Aorta (tissue), 5 donors: ENCODE measurements at regions of chr10 and their contacts with region 1.

Region 1: GRCh38 chr10:63919575-63920279 is 398.5 kb downstream of the REEP3 start:
- DNase-seq: no peak
- ATAC-seq: no peak
- H3K4me3 ChIP-seq: no peak overlapping the region
- H3K27ac ChIP-seq: no peak overlapping the region
- H3K4me1 ChIP-seq: no peaks in the 10 kb centered on the region
- H3K27me3 ChIP-seq: peaks cover 0 to 1% of the 10 kb centered on the region in 2 donors

Region 2: DNA sequence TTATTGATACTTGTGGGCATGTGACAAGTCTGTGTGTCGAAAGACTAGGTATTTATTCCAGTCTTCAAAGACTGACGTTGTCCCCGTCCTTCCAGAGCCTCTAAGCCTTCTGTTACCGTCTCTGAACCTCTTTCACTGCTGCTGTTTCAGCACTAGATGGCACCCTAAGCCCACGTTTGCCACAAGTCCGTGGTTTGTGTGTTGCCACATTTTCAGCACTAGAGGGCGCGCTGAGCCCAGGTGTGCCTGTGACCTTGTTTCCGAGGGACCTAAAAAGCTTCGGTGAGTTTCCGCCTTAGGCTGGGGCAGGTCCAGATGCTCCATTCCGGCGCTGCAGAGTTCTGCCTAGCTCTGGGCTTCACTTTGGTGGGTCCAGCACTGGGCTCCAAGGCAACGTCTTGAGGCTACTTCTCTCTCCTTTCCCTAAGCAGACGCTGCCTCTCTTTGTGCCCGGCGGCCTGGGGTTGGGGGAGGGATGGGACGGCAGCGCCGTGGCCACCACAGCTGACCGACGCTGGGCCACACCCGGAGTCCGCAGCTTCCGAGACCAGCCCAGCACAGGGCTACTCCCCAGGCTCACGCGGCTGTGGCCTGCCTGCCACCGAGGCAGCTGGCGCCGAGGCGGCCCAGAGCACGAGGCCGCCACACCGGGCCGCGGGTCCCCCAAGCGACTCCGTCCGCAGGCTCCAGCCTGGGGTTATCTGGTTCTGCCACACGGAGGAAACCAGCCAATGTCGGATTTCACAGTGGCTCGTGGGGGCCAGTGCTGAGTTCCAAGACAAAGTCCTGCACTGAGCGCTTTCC is 121.7 kb after region 1 on chr10:
- intact Hi-C with region 1: no loop called
- DNase-seq: peak; percentile 74 to 87
- ATAC-seq: peak; percentile 91
- H3K4me3 ChIP-seq: peak overlapping the region; percentile 4 to 27
- H3K27ac ChIP-seq: no peak overlapping the region
- H3K4me1 ChIP-seq: no peaks in the 10 kb centered on the region
- H3K27me3 ChIP-seq: no peaks in the 10 kb centered on the region

Region 3: DNA sequence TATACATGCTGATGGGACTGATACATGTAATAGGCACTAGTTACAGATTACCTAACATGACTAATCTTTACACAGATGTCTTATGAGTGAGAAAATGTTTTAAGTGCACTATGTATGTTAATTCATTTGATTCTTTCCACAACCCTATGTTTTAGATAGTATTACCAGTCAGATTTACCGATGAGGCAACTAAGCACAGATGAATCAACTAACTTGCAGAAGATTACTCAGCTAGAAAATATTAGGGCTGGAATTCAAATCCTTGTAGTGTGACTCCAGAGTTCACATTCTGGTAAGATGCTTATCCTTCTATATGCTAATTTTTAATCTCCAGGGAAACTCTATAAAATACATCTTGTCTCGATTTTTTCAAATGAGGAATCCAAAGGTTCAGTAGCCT is 566.4 kb after region 1 on chr10:
- intact Hi-C with region 1: loop called in 1 of 2 experiments (anchors 10 kb)
- DNase-seq: no peak
- ATAC-seq: no peak
- H3K4me3 ChIP-seq: no peak overlapping the region
- H3K27ac ChIP-seq: no peak overlapping the region
- H3K4me1 ChIP-seq: no peaks in the 10 kb centered on the region
- H3K27me3 ChIP-seq: no peaks in the 10 kb centered on the region